Heart left ventricle (tissue), 16 donors: ENCODE measurements at regions of chr11 and their contacts with region 1.

Region 1: DNA sequence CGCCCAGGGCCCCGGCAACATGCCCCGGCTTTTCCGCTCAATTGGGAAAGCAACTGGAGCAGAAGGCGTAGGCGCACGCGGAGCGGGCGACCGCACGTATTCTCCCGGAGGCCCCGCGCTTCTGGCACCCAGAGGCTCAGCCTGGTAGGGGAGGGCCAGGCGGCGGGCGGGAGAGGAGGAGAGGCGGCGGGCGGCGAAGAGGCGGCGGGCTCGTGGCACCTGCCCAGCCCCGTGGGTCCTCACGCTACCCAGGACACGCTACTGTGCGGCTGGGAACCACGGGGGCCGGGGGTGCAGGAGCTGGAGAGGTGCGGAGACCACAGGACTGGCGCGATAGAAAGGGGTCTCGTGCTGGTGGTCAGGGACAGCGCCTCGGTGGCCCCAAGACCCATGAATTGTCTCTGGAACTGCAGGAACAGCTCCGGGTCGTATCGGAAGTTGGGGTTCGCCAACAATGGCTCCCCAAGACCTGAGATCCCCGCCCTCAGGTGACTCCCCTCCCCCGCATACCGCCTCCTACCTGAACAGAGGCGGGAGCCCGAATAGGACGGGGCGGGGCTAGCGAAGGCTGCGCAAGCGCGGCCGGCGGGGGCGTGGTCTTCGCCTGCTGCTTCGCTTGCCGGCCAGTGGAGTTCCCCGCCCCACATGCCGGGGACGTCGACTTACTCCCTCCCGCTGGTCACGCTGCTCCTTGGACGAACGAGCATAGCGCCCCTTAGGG is at the start of gene SLC37A4:
- DNase-seq: peak; percentile 96 to 99 (median 98)
- ATAC-seq: peak; percentile 96 to 99 (median 97)
- H3K4me3 ChIP-seq: peak within 1 kb of the TSS; percentile 64 to 95 (median 82)
- H3K27ac ChIP-seq: peak within 1 kb of the TSS; percentile 6 to 85 (median 67)
- H3K4me1 ChIP-seq: peaks cover 0 to 25% (median 12%) of the 10 kb centered on the region in 12 donors
- H3K27me3 ChIP-seq: no peaks in the 10 kb centered on the region
- CTCF ChIP-seq: peak in 7 of 12 donors; percentile 72 to 97 (median 86)
- POLR2A ChIP-seq: peak in 1 of 2 donors; percentile 53
- total RNA-seq, gene SLC37A4: 4.5 to 18.5 (median 7.7) TPM

Region 2: GRCh38 chr11:118868659-118869058 is 161.8 kb before region 1 on chr11:
- intact Hi-C with region 1: no loop called
- DNase-seq: no peak
- ATAC-seq: no peak
- H3K4me3 ChIP-seq: no peak overlapping the region
- H3K27ac ChIP-seq: no peak overlapping the region
- H3K4me1 ChIP-seq: peaks cover 0 to 20% (median 12%) of the 10 kb centered on the region in 12 donors
- H3K27me3 ChIP-seq: no peaks in the 10 kb centered on the region
- CTCF ChIP-seq: no peak
- POLR2A ChIP-seq: no peak

Region 3: DNA sequence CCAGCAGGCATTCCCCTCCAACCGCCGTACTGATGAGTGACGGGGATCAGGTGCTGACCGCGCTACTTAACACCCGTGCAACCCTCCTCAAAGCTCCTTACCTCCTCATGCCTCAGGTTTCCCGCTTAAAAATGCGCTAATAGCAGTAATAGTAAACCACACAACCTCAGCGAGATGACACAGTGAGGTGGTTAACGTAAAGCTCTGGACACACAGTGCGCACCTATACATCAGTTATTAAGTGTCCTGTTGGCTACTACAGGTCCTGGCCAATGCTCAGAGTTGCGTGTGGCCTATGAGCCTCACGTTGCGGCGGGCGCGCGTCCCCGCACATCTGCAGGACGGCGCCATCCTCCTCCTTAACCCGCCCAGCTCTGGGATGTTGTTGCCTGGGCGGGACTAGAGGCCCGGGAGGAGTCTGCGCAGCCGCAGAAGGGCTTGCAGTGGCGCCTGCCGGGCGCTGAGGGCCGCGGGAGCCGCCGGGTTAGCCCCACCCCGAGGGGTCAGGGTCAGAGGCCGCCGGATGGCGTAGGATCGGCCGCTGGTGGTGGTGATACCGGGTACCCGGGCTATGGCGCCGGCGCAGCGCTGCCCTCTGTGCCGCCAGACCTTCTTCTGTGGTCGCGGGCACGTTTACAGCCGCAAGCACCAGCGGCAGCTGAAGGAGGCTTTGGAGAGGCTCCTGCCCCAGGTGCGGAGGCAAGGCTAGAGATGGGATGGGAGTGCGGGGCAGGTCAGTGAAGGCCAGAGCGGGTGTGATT is 32.7 kb before region 1 on chr11 and contains the start of gene CENATAC:
- intact Hi-C with region 1: loop called in 1 of 10 experiments (anchors 2 kb)
- DNase-seq: peak; percentile 95 to 98 (median 97)
- ATAC-seq: peak; percentile 98 to 100 (median 100)
- H3K4me3 ChIP-seq: peak within 1 kb of the TSS; percentile 53 to 95 (median 87)
- H3K27ac ChIP-seq: peak within 1 kb of the TSS; percentile 57 to 91 (median 84)
- H3K4me1 ChIP-seq: peaks cover 0 to 23% (median 17%) of the 10 kb centered on the region in 12 donors
- H3K27me3 ChIP-seq: no peaks in the 10 kb centered on the region
- CTCF ChIP-seq: peak in 4 of 12 donors; percentile 9 to 43 (median 28)
- POLR2A ChIP-seq: peak in 1 of 2 donors; percentile 95
- total RNA-seq, gene CENATAC: 7.9 to 15.8 (median 11.7) TPM

Region 4: DNA sequence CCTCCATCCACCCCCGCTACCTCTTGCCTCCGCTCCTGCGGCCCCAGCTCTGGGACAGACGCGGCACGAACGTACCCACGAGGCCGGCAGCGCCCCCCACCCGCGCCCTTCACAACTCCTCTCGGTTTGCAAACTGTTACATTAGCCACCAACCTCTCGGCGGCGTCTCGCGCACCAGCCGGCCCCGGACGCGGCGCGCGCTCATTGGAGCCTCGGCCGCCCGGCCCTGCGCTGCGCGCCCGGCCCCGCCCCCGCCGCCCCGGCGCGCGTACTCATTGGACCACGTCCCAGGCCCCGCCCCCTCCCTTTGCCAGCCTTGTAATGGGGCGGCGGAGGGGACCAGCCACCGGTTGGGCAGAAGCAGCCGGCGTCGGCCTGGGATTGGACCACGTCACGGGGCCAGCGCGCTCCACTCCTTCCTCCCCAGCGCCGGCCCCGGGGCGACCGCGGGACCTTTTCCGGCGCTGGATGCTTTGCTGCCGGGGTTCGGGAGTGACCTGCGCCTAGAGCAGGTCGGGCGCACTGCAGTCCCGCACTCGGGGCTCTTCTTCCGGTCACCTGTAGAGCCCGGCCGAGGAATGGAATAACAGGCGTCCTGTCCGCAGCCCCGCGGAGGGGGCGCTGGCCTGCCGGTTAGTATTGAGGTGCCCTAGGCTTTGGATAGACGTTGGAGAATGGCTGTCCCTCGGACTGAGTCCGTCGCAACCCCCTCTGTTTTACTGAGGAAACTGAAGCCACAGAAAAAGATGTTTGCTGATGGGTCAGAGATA is 26.7 kb after region 1 on chr11 and contains the start of gene HYOU1:
- intact Hi-C with region 1: loop called in 1 of 10 experiments (anchors 2 kb)
- DNase-seq: peak; percentile 98 to 100 (median 99)
- ATAC-seq: peak; percentile 96 to 99 (median 97)
- H3K4me3 ChIP-seq: peak within 1 kb of the TSS; percentile 70 to 99 (median 90)
- H3K27ac ChIP-seq: peak within 1 kb of the TSS; percentile 76 to 93 (median 87)
- H3K4me1 ChIP-seq: peaks cover 2 to 26% (median 18%) of the 10 kb centered on the region in 12 donors
- H3K27me3 ChIP-seq: no peaks in the 10 kb centered on the region
- CTCF ChIP-seq: peak in 3 of 12 donors; percentile 12 to 46 (median 26)
- POLR2A ChIP-seq: peak; percentile 72 to 73
- total RNA-seq, gene HYOU1: 45.9 to 104 (median 68.6) TPM